RWPE1 (cell line): ENCODE measurements at regions of chr2 and their contacts with region 1.

Region 1: GRCh38 chr2:207166039-207166348 is 246 bp upstream of the KLF7 start:
- DNase-seq: peak; percentile 98
- H3K27ac ChIP-seq: peak overlapping the region; percentile 98
- CTCF ChIP-seq: no peak

Region 2: DNA sequence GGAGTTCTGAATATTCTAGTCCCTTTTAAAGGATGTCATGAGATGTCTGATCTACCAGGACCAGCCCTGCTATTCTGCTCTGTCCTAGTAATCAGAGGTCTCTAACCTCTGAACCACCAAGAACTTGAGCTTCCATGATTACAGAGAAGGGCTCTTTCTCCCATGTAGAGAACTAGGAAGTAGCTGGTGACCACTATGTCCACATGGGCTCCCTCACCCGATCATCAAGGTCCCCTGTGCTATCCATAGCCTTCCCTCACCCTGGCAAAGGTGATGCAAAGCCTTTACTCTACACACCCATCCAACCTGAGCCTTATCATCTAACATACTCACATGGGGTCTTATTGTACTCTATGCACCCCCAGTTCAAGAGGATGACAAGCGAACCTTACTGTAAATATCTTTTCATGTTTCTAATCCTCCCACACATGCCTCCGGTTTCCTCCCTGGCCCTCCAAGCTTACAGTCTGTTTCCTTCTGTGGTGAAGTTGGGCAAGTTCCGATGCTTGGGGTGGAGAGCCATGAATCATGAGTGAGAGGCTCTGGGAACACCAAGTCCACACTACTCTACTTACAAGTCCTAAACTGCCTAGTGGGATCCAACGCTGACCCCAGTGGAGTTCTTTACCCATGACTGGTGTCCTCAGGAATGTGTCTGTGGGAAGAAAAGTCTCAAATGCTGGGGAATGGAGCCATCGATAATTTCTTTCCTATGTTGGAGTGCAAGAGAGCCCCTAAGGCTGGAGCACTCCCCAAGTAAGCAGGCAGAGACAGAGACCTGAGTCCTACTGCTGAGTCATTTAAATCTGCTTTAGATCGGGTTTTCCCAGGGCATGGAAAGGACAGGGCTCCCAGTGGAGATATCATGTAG is 73.1 kb after region 1 on chr2:
- CTCF ChIA-PET with region 1: interaction called, 6 read pairs
- POLR2A ChIA-PET with region 1: interaction called, 19 read pairs
- DNase-seq: peak; percentile 97
- H3K27ac ChIP-seq: peak overlapping the region; percentile 93
- CTCF ChIP-seq: no peak

Region 3: GRCh38 chr2:207337234-207338219 is 171.5 kb after region 1 on chr2:
- CTCF ChIA-PET with region 1: no interaction called
- POLR2A ChIA-PET with region 1: interaction called, 11 read pairs
- DNase-seq: peak; percentile 93
- H3K27ac ChIP-seq: peak overlapping the region; percentile 72
- CTCF ChIP-seq: no peak